B cell (primary cell): ENCODE measurements at regions of chr6 and their contacts with region 1.

Region 1: DNA sequence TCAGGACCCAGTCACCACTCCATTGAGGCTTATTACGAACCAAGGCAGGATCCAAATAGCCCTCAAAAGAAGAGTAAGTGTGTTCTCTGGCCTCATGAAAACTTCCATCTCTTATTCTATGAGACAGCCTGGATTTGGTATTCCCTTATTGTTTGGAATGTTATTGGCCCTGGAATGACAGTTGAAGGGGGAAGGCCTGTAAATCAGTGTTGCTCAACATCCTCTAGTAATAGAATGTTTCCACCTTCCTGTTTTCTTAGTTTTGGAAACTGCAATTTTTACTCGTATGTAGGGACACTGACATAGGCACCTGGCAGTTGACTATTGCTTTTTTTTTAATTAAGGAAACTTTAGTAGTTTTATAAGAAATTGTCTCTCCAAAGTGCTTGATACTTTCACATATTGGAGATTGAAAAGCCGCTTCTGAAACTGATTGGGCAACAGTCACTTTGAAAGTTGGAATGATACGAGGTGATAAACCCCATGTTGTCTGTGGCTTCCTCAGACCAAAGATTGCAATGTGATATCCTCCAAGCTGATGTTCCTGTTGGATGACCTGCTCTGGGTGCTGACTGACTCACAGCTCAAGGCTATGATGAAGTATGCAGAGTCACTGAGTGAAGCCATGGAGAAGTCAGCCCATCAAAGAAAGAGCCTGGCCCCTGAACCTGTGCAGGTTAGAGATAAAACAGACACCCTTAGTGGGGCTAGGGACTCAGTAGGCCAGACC is 43.1 kb downstream of the BLTP3A start:
- DNase-seq: no peak
- ATAC-seq: no peak
- H3K4me3 ChIP-seq: no peak overlapping the region
- H3K4me3 Mint-ChIP-seq: no peak overlapping the region
- H3K27ac ChIP-seq: no peak overlapping the region
- H3K27ac Mint-ChIP-seq: no peak overlapping the region
- H3K4me1 ChIP-seq: no peaks in the 10 kb centered on the region
- H3K4me1 Mint-ChIP-seq: no peaks in the 10 kb centered on the region
- H3K27me3 ChIP-seq: no peaks in the 10 kb centered on the region
- H3K27me3 Mint-ChIP-seq: no peaks in the 10 kb centered on the region
- CTCF ChIP-seq: no peak

Region 2: DNA sequence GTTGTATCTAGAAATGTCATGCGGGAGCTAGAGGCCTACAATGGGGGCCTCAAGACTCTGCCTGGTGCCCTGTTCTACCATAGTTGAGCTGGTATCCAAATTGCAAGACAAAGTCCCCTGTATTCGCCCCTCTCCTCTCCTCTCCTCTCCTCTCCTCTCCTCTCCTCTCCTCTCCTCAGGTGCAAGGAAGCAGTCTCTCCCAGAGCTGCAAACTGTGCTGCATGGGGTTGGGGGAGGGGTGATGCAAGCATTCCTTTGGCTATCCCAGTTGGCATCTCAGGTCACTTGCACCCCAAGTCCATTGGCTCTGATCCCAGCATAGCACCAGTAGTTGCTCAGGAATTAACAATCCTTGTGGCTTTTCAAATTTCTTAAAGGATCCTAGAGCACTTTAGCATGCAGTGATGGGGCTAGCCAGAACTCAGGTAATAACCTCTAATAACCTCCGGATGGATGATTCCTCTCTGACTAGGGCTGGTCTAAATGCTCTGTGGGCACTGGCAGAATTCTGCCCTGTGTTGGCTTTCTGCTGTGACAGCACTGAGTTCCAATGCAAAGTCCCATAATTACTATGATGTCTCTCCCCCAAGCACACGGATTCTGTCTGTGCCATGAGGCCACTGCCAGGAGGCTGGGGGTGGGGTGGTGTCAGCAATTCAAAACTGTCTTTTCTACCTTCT is 17.6 kb after region 1 on chr6:
- CTCF ChIA-PET with region 1: interaction called, 3 read pairs
- POLR2A ChIA-PET with region 1: interaction called, 12 read pairs
- intact Hi-C with region 1: no loop called
- DNase-seq: no peak
- ATAC-seq: no peak
- H3K4me3 ChIP-seq: no peak overlapping the region
- H3K4me3 Mint-ChIP-seq: no peak overlapping the region
- H3K27ac ChIP-seq: no peak overlapping the region
- H3K27ac Mint-ChIP-seq: no peak overlapping the region
- H3K4me1 ChIP-seq: no peaks in the 10 kb centered on the region
- H3K4me1 Mint-ChIP-seq: no peaks in the 10 kb centered on the region
- H3K27me3 ChIP-seq: no peaks in the 10 kb centered on the region
- H3K27me3 Mint-ChIP-seq: no peaks in the 10 kb centered on the region
- CTCF ChIP-seq: no peak